ENCODE measurements at regions of chr7 and their contacts with region 1.

Region 1: DNA sequence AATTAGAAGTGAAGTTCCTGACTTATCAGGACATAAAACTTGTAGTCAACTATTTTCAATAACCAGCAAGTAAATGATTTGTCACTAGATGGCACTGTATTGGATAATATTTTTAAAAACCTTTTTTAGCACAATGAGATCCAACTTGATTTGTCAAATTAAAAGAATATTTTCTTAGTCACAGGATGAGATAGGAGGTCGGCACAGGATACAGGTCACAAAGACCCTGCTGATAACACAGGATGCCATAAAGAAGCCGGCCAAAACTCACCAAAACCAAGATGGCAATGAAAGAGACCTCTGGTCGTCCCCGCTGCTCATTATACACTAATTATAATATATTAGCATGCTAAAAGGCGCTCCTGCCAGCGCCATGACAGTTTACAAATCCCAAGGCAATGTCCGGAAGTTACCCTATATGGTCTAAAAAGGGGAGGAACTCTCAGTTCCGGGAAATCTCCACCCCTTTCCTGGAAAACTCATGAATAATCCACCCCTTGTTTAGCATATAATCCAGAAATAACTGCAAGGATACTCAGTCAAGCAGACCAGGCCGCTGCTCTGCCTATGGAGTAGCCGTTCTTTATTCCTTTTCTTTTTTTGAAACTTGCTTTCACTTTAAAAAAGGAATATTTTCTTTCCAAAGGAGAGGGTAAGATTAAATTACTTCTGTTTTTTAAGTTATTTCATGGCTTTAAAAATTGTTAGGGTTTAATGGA is 255.7 kb upstream of the MKLN1 start:
- DNase-seq: no peak
- H3K4me3 ChIP-seq: no peak overlapping the region
- H3K27ac ChIP-seq: no peak overlapping the region
- H3K4me1 ChIP-seq: peaks cover 3% of the 10 kb centered on the region
- H3K27me3 ChIP-seq: no peaks in the 10 kb centered on the region
- CTCF ChIP-seq: peak; percentile 60; the same call in 1 of the 2 replicates

Region 2: DNA sequence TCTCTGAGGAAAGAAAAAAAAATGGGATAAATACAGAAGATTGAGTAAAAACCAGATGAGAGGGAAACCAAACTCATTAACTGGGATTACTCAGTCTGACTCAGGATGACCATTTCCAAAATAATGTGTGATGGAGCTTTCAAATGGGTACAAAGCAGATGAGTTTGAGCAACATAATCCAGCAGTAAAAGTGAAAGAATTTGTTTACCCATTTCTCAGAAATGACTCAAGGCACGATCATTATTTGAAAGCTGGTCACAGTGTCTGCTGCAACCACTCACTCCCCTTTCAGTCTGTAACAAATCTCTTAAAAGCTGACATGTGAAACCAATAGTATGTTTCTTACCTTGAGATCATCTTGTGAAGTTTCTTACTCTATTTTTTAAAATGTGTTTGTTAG is 233.2 kb before region 1 on chr7:
- CTCF ChIA-PET with region 1: no interaction called
- POLR2A ChIA-PET with region 1: no interaction called
- intact Hi-C with region 1: no loop called
- DNase-seq: peak in 1 of 2 experiments; percentile 78
- H3K4me3 ChIP-seq: no peak overlapping the region
- H3K27ac ChIP-seq: peak overlapping the region; percentile 57
- H3K4me1 ChIP-seq: peaks cover 25% of the 10 kb centered on the region
- H3K27me3 ChIP-seq: no peaks in the 10 kb centered on the region
- CTCF ChIP-seq: no peak

Region 3: GRCh38 chr7:130996841-130997231 is 75.1 kb before region 1 on chr7:
- CTCF ChIA-PET with region 1: no interaction called
- POLR2A ChIA-PET with region 1: no interaction called
- intact Hi-C with region 1: no loop called
- DNase-seq: peak; percentile 81 to 98
- H3K4me3 ChIP-seq: peak overlapping the region; percentile 18; the same call in 1 of the 2 replicates
- H3K27ac ChIP-seq: peak overlapping the region; percentile 79
- H3K4me1 ChIP-seq: peaks cover 71% of the 10 kb centered on the region
- H3K27me3 ChIP-seq: no peaks in the 10 kb centered on the region
- CTCF ChIP-seq: no peak

Region 4: GRCh38 chr7:131302876-131303707 is 231.1 kb after region 1 on chr7:
- CTCF ChIA-PET with region 1: no interaction called
- POLR2A ChIA-PET with region 1: no interaction called
- intact Hi-C with region 1: loop called (anchors 2 kb)
- DNase-seq: peak in 1 of 2 experiments; percentile 38
- H3K4me3 ChIP-seq: no peak overlapping the region
- H3K27ac ChIP-seq: no peak overlapping the region
- H3K4me1 ChIP-seq: peaks cover 11% of the 10 kb centered on the region
- H3K27me3 ChIP-seq: no peaks in the 10 kb centered on the region
- CTCF ChIP-seq: peak; percentile 70

Region 5: GRCh38 chr7:131370523-131370968 is 298.6 kb after region 1 on chr7:
- CTCF ChIA-PET with region 1: interaction called, 14 read pairs
- POLR2A ChIA-PET with region 1: no interaction called
- intact Hi-C with region 1: no loop called
- DNase-seq: peak; percentile 57 to 68
- H3K4me3 ChIP-seq: no peak overlapping the region
- H3K27ac ChIP-seq: peak overlapping the region; percentile 43
- H3K4me1 ChIP-seq: peaks cover 29% of the 10 kb centered on the region
- H3K27me3 ChIP-seq: no peaks in the 10 kb centered on the region
- CTCF ChIP-seq: no peak

Region 6: GRCh38 chr7:131507592-131508331 is 435.8 kb after region 1 on chr7:
- CTCF ChIA-PET with region 1: interaction called, 15 read pairs
- POLR2A ChIA-PET with region 1: no interaction called
- intact Hi-C with region 1: no loop called
- DNase-seq: peak; percentile 47 to 85
- H3K4me3 ChIP-seq: no peak overlapping the region
- H3K27ac ChIP-seq: no peak overlapping the region
- H3K4me1 ChIP-seq: no peaks in the 10 kb centered on the region
- H3K27me3 ChIP-seq: no peaks in the 10 kb centered on the region
- CTCF ChIP-seq: peak; percentile 95